ENCODE measurements at regions of chrX and their contacts with region 1.

Region 1: DNA sequence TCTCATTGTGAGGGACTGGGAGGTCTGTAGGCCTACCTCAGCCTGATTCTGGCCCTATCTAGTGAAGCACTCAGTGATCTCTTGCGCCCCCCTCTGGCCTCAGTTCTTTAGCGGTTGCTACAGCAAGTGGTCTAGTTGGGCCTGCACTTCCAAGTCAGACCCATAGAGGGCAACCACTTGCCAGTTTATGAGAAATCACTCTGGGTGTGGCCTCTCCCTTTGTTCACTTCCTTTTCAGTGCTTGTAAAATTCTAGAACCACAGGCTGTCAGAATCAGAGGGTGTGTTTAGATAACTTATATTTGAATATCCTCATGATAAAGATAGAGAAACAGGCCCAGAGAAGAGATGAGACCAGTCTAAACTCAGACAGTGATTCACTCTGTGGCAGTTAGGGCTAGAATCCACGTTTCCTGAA is 60.9 kb upstream of the LAS1L start:
- DNase-seq: peak; percentile 69
- CTCF ChIP-seq: peak; percentile 98

Region 2: GRCh38 chrX:65731684-65732289 is 136.3 kb after region 1 on chrX:
- in situ Hi-C with region 1: loop called (anchors 10 kb)
- DNase-seq: no peak
- CTCF ChIP-seq: no peak

Region 3: GRCh38 chrX:65871661-65872311 is 276.3 kb after region 1 on chrX:
- in situ Hi-C with region 1: loop called (anchors 25 kb)
- DNase-seq: peak; percentile 16
- CTCF ChIP-seq: no peak

Region 4: DNA sequence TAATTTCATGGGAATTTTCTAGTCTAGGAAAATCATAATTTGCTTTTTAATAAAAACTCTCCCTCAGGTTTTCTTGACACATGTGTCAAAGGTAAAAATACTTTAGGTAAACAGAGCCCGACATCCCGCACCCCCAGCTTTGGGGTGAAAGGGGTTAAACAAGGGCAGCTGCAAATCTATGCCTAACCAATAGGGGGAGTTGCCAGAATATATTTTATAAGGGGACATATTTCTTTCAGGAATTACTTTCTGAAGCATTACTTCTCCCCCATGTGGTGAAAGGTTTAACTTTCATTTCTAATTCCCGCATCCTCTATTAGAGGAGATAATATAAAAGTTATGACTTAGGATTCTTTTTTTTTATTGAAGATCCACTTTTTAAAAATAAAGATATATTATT is 514.6 kb after region 1 on chrX:
- in situ Hi-C with region 1: loop called (anchors 25 kb)
- DNase-seq: peak; percentile 4
- CTCF ChIP-seq: no peak

Region 5: DNA sequence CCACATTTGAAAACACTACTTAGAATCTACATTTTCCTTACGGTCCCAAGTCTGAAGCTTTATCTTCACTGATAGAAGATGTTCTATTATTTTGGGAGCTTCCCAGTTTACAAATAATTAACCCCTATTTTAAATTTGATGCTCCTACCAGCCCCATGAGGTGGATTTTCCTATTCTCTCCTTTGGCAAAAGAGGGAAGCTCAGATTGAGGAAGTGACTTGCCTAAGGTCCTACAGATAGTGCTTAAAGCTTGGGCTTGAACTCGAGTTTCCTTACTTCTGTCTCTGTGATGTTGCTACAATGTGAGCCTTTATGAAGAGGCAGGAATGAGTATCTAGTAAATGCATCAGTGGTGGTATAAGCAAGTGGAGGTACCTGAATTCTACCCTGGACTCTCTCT is 596.1 kb after region 1 on chrX:
- in situ Hi-C with region 1: loop called (anchors 25 kb)
- DNase-seq: no peak
- CTCF ChIP-seq: no peak

Region 6: DNA sequence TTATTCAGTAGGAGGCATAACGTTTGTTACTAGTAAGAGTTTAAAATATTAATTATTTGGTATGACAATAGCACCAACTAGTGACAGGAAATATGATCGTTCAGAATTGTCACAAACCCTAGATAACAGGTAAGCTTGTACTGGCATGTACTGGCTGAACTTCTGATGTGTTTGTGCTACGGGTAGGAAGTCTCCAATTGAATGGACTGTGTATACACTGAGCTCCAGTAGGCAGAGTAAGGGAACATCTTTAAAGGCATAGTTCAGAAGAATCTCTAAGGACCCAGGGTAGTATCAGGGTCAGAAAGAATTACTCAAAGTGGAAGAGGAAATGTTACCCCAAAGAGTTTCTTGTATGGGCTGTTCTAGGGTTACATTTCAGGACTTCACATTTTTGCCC is 813.0 kb after region 1 on chrX:
- in situ Hi-C with region 1: loop called (anchors 25 kb)
- DNase-seq: peak; percentile 8
- CTCF ChIP-seq: peak; percentile 26

Region 7: DNA sequence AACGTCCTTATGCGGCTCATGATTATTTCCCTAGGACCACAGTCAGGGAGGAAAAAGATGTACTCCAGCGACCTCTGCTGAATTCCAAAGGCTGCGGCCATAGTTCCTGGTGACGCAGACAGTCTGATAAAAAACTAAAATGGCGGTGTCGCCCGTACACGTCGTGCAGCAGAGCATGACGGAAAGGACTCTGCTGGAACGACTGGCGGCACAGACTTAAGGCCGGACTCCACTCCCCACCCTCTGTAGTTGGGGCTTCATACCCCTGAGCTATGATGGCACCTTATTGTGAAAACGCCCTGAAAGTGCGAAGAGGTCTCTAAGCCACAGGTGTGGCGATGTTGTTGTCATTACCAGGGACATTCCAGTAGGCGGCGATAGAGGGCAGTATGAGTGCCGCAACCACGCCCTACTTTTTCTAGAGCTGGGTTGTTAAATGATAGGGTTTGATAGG is 1133.4 kb after region 1 on chrX:
- in situ Hi-C with region 1: loop called (anchors 25 kb)
- DNase-seq: peak; percentile 21
- CTCF ChIP-seq: peak; percentile 49

Measured in GM13976 (cell line).